Endothelial cell of umbilical vein (primary cell): ENCODE measurements at regions of chr21 and their contacts with region 1.

Region 1: GRCh38 chr21:37009740-37010341 is 3.3 kb downstream of the RIPPLY3 start:
- DNase-seq: peak; percentile 90
- H3K4me3 ChIP-seq: peak overlapping the region in 2 of 3 experiments; percentile 10 to 40
- H3K27ac ChIP-seq: no peak overlapping the region
- H3K4me1 ChIP-seq: peaks cover 8% of the 10 kb centered on the region
- H3K27me3 ChIP-seq: peaks cover 25 to 32% of the 10 kb centered on the region in 2 experiments
- CTCF ChIP-seq: peak; percentile 87 to 94
- POLR2A ChIP-seq: no peak

Region 2: GRCh38 chr21:36934864-36935420 is 74.9 kb before region 1 on chr21:
- CTCF ChIA-PET with region 1: interaction called, 8 read pairs
- POLR2A ChIA-PET with region 1: no interaction called
- dilution Hi-C with region 1: no loop called
- intact Hi-C with region 1: loop called (anchors 1 kb)
- DNase-seq: no peak
- H3K4me3 ChIP-seq: no peak overlapping the region
- H3K27ac ChIP-seq: no peak overlapping the region
- H3K4me1 ChIP-seq: no peaks in the 10 kb centered on the region
- H3K27me3 ChIP-seq: no peaks in the 10 kb centered on the region
- CTCF ChIP-seq: no peak
- POLR2A ChIP-seq: no peak

Region 3: GRCh38 chr21:37072988-37073416 is 63.2 kb after region 1 on chr21 and contains the starts of genes PIGP and TTC3:
- CTCF ChIA-PET with region 1: no interaction called
- POLR2A ChIA-PET with region 1: no interaction called
- dilution Hi-C with region 1: no loop called
- intact Hi-C with region 1: loop called (anchors 5 kb)
- DNase-seq: peak; percentile 97
- H3K4me3 ChIP-seq: peak within 1 kb of the TSS; percentile 49 to 88 (median 60)
- H3K27ac ChIP-seq: peak within 1 kb of the TSS; percentile 95
- H3K4me1 ChIP-seq: peaks cover 17% of the 10 kb centered on the region
- H3K27me3 ChIP-seq: no peaks in the 10 kb centered on the region
- CTCF ChIP-seq: no peak
- POLR2A ChIP-seq: peak; percentile 73
- total RNA-seq, gene PIGP: 11.4 and 12.5 TPM in 2 replicates
- total RNA-seq, gene TTC3: 104 and 113 TPM in 2 replicates

Region 4: GRCh38 chr21:37118187-37118826 is 108.5 kb after region 1 on chr21:
- CTCF ChIA-PET with region 1: no interaction called
- POLR2A ChIA-PET with region 1: no interaction called
- dilution Hi-C with region 1: no loop called
- intact Hi-C with region 1: no loop called
- DNase-seq: no peak
- H3K4me3 ChIP-seq: no peak overlapping the region
- H3K27ac ChIP-seq: no peak overlapping the region
- H3K4me1 ChIP-seq: no peaks in the 10 kb centered on the region
- H3K27me3 ChIP-seq: no peaks in the 10 kb centered on the region
- CTCF ChIP-seq: no peak
- POLR2A ChIP-seq: no peak